H1 (cell line): ENCODE measurements at regions of chr15 and their contacts with region 1.

Region 1: DNA sequence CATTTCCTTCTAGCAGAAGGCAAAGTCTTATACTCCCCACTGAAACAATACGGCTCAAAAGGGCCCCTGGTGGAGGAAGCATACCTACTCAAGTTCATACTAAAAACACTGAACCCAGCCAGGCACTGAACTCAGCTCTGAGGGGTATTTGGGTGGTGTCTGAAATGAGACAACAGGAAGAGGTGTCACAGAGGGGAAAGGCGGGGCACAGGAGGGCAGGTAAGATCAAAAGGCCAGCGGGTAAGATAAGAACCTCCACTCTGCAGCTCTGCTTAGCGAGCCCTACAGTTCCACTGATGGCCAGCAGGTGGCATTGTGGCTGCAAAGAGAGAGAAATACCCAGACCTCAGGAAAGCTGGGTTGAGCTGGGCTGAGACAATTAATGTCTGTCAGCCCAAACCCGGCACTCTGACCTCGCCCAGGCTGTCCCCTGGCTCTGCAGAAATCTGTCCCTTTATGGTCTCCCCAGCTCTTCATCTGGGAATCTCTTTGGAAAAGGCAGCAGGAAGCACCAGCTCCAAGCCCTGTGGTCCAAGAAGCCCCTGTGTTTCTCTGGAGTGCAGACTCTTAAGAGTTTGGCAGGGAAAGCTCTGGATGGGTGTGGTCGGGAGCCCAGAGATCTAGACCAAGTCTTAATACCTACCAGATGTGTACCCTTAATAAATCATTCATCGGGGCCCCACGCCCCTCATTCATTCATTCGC is 8.4 kb downstream of the MFGE8 start:
- DNase-seq: peak in 1 of 2 experiments; percentile 94
- H3K4me3 ChIP-seq: no peak overlapping the region
- H3K27ac ChIP-seq: no peak overlapping the region
- H3K4me1 ChIP-seq: peaks cover 2 to 32% (median 16%) of the 10 kb centered on the region in 4 experiments
- H3K27me3 ChIP-seq: no peaks in the 10 kb centered on the region
- CTCF ChIP-seq: peak; percentile 87 to 99 (median 91)
- EP300 ChIP-seq: no peak
- POLR2A ChIP-seq: no peak
- RAD21 ChIP-seq: peak; percentile 92 to 94

Region 2: GRCh38 chr15:88878720-88879184 is 26.0 kb before region 1 on chr15:
- CTCF ChIA-PET with region 1: interaction called, 15 read pairs
- POLR2A ChIA-PET with region 1: interaction called, 361 read pairs
- DNase-seq: peak in 1 of 2 experiments; percentile 89
- H3K4me3 ChIP-seq: no peak overlapping the region
- H3K27ac ChIP-seq: no peak overlapping the region
- H3K4me1 ChIP-seq: peaks cover 0 to 6% (median under 1%) of the 10 kb centered on the region in 4 experiments; a peak in 3 of 7 replicates
- H3K27me3 ChIP-seq: no peaks in the 10 kb centered on the region
- CTCF ChIP-seq: peak; percentile 89 to 96 (median 95)
- EP300 ChIP-seq: no peak
- POLR2A ChIP-seq: no peak
- RAD21 ChIP-seq: peak; percentile 80 to 87

Region 3: GRCh38 chr15:88938802-88939485 is 34.2 kb after region 1 on chr15:
- CTCF ChIA-PET with region 1: interaction called, 21 read pairs
- POLR2A ChIA-PET with region 1: interaction called, 4 read pairs
- DNase-seq: peak in 1 of 2 experiments; percentile 52
- H3K4me3 ChIP-seq: no peak overlapping the region
- H3K27ac ChIP-seq: no peak overlapping the region
- H3K4me1 ChIP-seq: peaks cover 0 to 7% (median 2%) of the 10 kb centered on the region in 4 experiments; a peak in 4 of 7 replicates
- H3K27me3 ChIP-seq: no peaks in the 10 kb centered on the region
- CTCF ChIP-seq: no peak
- EP300 ChIP-seq: no peak
- POLR2A ChIP-seq: no peak
- RAD21 ChIP-seq: peak; percentile 5 to 45; a peak in 2 of 4 replicates

Region 4: DNA sequence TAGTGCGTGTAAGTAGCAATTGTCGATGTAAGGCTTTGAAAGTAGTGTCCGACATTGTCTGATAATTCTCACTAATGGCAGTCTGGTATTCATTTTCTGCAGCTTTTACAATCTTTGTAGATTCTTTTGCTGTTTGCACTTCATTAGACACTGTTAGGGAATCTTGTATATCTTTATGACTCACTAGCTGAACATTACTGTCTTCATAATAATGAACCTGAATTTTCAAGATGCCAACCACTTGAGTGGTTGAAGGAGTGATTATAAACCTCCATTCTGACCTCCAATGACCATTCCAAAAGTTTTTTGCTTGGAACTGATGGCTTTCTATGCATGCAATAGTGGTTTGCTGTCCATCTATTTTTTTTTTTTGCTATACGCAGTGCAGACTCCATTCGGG is 84.8 kb after region 1 on chr15:
- CTCF ChIA-PET with region 1: interaction called, 25 read pairs
- POLR2A ChIA-PET with region 1: interaction called, 607 read pairs
- DNase-seq: no peak
- H3K4me3 ChIP-seq: no peak overlapping the region
- H3K27ac ChIP-seq: no peak overlapping the region
- H3K4me1 ChIP-seq: peaks cover 17 to 43% (median 38%) of the 10 kb centered on the region in 4 experiments
- H3K27me3 ChIP-seq: no peaks in the 10 kb centered on the region
- CTCF ChIP-seq: no peak
- EP300 ChIP-seq: no peak
- POLR2A ChIP-seq: no peak
- RAD21 ChIP-seq: no peak

Region 5: DNA sequence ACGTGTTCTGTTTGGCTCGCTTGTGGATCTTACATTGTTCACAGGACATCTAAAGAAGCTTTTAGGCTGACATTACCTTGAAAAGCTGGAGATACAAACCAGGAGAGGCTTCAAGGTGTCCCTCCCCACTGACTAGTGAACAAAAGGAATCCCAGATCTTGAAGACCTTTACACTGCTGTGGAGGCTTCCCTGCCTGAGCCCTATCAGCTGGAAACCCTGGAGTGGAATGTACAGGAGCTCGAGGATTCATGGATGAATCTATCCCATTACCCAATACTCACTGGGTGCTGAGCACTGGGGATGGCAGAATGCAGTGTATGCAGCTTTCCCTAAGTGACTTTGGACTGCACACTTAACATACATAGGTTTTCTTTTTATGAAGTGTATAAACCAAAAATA is 90.7 kb after region 1 on chr15:
- CTCF ChIA-PET with region 1: interaction called, 94 read pairs
- POLR2A ChIA-PET with region 1: interaction called, 607 read pairs
- DNase-seq: no peak
- H3K4me3 ChIP-seq: peak overlapping the region in 1 of 4 experiments; percentile 29; a peak in 1 of 8 replicates
- H3K27ac ChIP-seq: 0 out of 2 replicates have a peak overlapping the region, but pooled peaks have one; percentile 39
- H3K4me1 ChIP-seq: peaks cover 16 to 55% (median 44%) of the 10 kb centered on the region in 4 experiments
- H3K27me3 ChIP-seq: no peaks in the 10 kb centered on the region
- CTCF ChIP-seq: no peak
- EP300 ChIP-seq: no peak
- POLR2A ChIP-seq: peak; percentile 21 to 57; a peak in 2 of 3 replicates
- RAD21 ChIP-seq: peak in 1 of 2 experiments; percentile 13; a peak in 1 of 4 replicates

Region 6: DNA sequence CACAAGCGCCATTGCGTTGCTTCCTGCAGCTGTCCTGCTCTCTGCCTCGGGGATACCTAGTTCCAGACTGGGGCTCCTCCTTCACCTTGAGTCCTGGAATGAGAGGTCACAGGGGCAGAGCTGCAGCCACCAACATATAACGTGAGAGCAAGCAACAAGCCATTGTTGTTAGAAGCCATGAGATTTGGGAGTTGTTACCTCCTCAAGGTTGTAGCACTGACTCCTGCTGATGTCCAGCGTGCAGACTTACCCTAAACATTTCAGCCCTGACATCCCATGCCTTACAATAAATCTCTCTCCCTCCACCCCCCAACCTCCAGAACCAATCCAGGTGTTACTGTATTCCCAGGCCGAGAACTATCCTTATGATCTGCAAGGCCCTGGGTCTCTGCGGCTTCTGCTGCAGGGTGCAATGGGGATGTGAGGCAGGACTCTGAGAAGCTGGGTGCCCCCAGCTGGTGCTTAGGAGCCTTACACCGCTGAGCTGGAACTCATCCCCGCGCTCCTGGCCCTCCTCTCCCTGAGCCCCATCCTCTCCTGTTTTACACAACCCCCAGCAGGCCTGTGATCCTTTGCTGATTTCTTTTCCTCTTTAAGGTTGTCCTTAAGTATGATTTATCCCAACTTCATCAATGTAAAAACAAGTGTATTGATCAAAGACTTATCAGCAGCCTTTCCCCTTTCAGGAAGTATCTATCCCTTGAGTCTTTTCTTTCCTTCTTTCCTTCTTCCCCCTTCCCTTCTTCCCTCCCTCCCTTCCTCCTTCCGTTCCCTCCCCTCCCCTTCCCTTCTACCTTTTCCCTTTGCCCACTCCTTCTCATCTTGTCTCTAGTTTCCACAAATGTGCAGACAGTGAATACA is 99.3 kb after region 1 on chr15:
- CTCF ChIA-PET with region 1: interaction called, 94 read pairs
- POLR2A ChIA-PET with region 1: interaction called, 607 read pairs
- DNase-seq: no peak
- H3K4me3 ChIP-seq: no peak overlapping the region
- H3K27ac ChIP-seq: no peak overlapping the region; the same call in 1 of the 2 replicates
- H3K4me1 ChIP-seq: peaks cover 16 to 35% (median 20%) of the 10 kb centered on the region in 4 experiments
- H3K27me3 ChIP-seq: no peaks in the 10 kb centered on the region
- CTCF ChIP-seq: peak; percentile 71 to 79 (median 74)
- EP300 ChIP-seq: no peak
- POLR2A ChIP-seq: no peak
- RAD21 ChIP-seq: peak; percentile 82 to 87

Region 7: GRCh38 chr15:89017370-89018066 is 112.7 kb after region 1 on chr15:
- CTCF ChIA-PET with region 1: interaction called, 34 read pairs
- POLR2A ChIA-PET with region 1: interaction called, 14 read pairs
- DNase-seq: peak; percentile 65 to 98
- H3K4me3 ChIP-seq: peak overlapping the region in 1 of 4 experiments; percentile 30; a peak in 3 of 8 replicates
- H3K27ac ChIP-seq: no peak overlapping the region
- H3K4me1 ChIP-seq: peaks cover 2 to 12% (median 3%) of the 10 kb centered on the region in 4 experiments; a peak in 5 of 7 replicates
- H3K27me3 ChIP-seq: no peaks in the 10 kb centered on the region; a peak in 1 of 7 replicates
- CTCF ChIP-seq: peak; percentile 84 to 95 (median 95)
- EP300 ChIP-seq: no peak
- POLR2A ChIP-seq: no peak
- RAD21 ChIP-seq: peak; percentile 82 to 92